ENCODE measurements at regions of chr3 and their contacts with region 1.

Region 1: GRCh38 chr3:173090492-173090891 is 50.5 kb downstream of the SPATA16 start:
- DNase-seq: no peak

Region 2: GRCh38 chr3:172039436-172040077 is 1050.9 kb before region 1 on chr3 and contains the start of gene FNDC3B:
- intact Hi-C with region 1: no loop called
- DNase-seq: peak; percentile 97
- total RNA-seq, gene FNDC3B: 142 to 167 TPM

Region 3: DNA sequence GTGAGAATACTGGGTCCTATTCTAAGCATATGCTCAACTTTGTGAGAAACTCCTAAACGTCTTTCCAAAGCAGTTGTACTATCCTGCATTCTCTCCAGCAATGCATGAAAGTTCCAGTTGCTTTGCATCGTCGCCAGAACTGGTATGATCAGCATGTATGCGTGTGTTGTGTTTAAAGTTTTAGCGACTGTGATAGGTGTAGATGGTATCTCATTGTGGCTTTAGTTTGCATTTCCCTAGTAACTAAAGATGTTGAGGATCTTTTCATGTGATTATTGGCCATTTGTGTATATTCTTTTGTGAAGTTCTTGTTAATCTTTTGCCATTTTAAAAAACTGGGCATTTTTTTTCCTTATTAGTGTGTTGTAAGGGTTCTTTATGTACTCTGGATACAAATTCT is 64.6 kb before region 1 on chr3:
- intact Hi-C with region 1: no loop called
- DNase-seq: no peak

Region 4: DNA sequence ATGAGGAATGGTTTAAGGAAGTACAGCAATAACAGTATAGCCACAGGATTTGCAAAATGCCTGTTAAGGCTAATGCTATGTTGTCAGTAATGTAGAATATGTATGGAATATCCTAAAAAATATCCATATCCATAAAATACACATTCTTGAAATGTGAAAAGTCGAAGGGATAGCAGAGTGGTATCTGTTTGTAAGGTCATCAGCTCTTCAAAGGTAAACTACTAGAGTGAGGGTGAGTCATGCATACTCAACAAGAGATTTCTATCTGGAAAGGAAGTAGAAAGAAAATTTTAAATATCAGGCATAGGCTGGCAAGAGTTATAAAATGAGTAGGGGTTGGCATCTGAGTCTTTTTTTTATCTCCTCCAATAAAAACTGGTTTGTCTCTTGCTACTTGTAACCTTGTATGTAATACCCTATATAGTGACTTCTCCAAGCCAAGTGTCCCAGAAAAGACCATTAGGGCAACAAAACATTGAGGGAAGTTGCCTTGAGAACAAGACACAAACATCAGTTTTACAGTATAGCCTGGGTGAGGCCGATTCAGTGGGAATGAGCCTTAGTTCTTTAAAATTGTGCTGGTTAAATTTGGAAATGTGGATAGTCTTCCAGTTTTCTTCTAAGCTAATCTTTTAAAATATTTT is 52.5 kb before region 1 on chr3:
- intact Hi-C with region 1: loop called in 1 of 2 experiments (anchors 2 kb)
- DNase-seq: no peak